ENCODE measurements at regions of chr12 and their contacts with region 1.

Region 1: DNA sequence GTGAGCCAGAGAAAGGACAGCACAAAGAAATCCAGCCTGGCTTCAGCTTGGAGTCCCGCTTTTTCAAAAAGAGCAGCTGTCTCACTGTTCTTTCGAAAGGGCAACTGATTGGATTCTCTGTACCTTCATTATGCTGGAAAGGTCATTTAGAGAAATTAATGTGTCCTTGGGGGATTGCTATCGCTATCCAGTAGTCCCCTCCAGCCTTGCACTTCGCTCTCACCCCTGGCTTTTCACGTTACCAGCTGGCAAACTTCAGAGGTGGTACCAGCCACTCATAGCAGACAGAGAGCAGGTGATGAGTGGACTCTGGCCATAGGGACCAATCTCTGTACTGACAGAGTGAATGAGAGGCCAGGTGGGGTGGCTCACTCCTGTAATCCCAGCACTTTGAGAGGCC is 11.8 kb upstream of the NUAK1 start:
- DNase-seq: no peak
- ATAC-seq: no peak
- H3K4me3 ChIP-seq: no peak overlapping the region
- H3K27ac ChIP-seq: no peak overlapping the region
- H3K4me1 ChIP-seq: peaks cover 40% of the 10 kb centered on the region
- H3K27me3 ChIP-seq: no peaks in the 10 kb centered on the region
- CTCF ChIP-seq: no peak

Region 2: DNA sequence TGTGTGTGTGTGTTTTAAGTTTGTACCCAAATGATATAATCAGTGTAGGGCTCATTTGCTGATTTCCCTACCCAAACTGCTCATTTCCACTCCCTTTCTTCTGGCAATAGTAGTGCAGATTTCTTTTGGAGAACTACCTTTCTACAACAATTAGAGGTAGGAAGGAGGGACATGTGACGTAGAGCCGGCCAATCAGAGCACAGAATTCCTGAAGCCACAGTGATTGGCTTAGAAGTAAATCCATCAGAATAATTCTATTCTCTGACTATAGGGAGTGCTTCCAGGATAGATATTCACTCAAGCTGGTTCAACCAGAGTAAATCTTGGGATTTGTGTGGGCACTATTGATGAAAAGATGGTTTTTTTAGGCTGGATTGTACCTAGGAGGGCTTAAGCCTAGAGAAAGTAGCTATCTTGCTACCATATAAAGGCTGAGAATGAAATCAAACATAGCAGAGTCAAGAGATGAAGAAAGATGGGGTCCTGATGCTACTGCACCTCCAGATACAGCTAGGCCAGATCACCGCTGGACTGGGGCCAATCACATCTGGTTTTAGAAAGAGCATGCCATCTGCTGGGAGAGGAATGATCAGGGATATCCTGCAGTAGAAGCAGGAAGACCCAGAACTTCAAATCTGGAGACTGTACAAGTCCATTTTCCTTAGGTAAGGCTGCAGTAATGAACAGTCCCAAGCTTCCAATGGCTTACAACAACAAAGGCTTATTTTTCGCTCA is 42.3 kb after region 1 on chr12:
- intact Hi-C with region 1: loop called (anchors 2 to 5 kb)
- DNase-seq: no peak
- ATAC-seq: no peak
- H3K4me3 ChIP-seq: no peak overlapping the region
- H3K27ac ChIP-seq: no peak overlapping the region
- H3K4me1 ChIP-seq: peaks cover 43% of the 10 kb centered on the region
- H3K27me3 ChIP-seq: no peaks in the 10 kb centered on the region
- CTCF ChIP-seq: no peak

Region 3: GRCh38 chr12:106197906-106198623 is 47.5 kb after region 1 on chr12:
- intact Hi-C with region 1: loop called (anchors 2 to 5 kb)
- DNase-seq: no peak
- ATAC-seq: no peak
- H3K4me3 ChIP-seq: no peak overlapping the region
- H3K27ac ChIP-seq: peak overlapping the region; percentile 2
- H3K4me1 ChIP-seq: peaks cover 49% of the 10 kb centered on the region
- H3K27me3 ChIP-seq: no peaks in the 10 kb centered on the region
- CTCF ChIP-seq: no peak